T-cell (primary cell): ENCODE measurements at regions of chr6 and their contacts with region 1.

Region 1: DNA sequence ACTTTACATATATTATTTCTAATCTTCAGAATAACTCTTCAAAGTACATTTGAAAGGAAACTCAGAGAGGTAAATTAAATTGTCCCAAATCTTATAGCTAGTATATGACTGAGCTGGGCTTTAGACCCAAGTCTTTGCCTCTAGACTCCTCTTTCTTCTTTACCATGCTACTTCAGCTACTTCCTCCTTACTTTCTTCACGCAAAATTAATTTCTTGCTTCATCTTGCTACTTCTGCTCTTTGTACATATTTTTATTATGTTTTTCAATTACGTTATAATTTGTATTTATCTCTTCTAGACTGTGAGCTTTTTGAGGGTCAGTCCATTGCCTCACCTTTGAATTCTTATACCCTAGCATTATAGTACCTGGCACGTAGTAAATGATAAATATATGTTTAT is 5.3 kb downstream of the TMEM170B start:
- DNase-seq: no peak
- ATAC-seq: no peak
- H3K4me3 ChIP-seq: no peak overlapping the region
- H3K4me3 Mint-ChIP-seq: no peak overlapping the region
- H3K27ac ChIP-seq: no peak overlapping the region
- H3K27ac Mint-ChIP-seq: no peak overlapping the region
- H3K4me1 ChIP-seq: peaks cover 3 to 7% of the 10 kb centered on the region in 2 experiments
- H3K4me1 Mint-ChIP-seq: peaks cover 11 to 16% (median 15%) of the 10 kb centered on the region in 3 donors
- H3K27me3 ChIP-seq: no peaks in the 10 kb centered on the region
- H3K27me3 Mint-ChIP-seq: no peaks in the 10 kb centered on the region

Region 2: DNA sequence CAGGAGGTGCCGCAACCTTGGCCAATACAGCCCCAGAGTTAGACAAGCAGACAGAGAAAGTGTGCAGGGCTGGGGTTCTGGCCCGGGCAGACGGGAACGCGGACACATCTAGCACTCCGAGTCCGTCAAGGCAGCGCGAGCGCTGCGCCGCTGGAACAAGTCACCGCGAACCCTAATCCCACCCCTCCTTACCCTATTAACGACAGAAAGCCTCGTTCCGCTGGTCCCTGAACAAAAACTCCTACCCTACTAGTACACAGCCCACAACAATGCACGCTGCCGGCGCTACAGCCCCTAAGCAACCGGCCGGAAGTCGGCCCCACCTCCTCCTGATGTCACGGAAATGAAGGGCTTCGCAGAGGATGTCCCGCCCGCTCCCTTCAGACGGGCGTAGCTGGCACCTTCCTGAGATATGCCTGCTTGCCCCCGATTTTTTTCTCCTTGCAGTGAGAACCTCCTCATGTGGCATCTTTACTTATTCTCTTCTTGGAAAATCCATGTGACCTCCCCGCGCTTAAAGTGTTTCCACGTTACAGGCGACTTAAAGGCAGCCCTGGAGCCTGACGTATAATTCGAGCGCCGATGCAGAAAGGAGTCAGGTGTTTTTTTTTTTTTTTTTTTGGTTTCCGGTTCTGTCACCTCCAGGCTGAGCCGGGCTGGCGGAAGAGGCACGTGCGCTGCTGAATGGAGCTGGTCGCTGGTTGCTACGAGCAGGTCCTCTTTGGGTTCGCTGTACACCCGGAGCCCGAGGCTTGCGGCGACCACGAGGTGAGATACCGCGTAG is 848.4 kb before region 1 on chr6 and contains the starts of genes C6orf52 and PAK1IP1:
- CTCF ChIA-PET with region 1: no interaction called
- POLR2A ChIA-PET with region 1: interaction called in 1 of 2 experiments, 16 read pairs
- DNase-seq: peak; percentile 88 to 95 (median 93)
- ATAC-seq: peak; percentile 95 to 97 (median 96)
- H3K4me3 ChIP-seq: peak within 1 kb of the TSS; percentile 93 to 100
- H3K4me3 Mint-ChIP-seq: peak within 1 kb of the TSS; percentile 93 to 99 (median 99)
- H3K27ac ChIP-seq: peak within 1 kb of the TSS; percentile 98
- H3K27ac Mint-ChIP-seq: peak within 1 kb of the TSS; percentile 100
- H3K4me1 ChIP-seq: peaks cover 16 to 24% of the 10 kb centered on the region in 2 experiments
- H3K4me1 Mint-ChIP-seq: peaks cover 40 to 47% (median 41%) of the 10 kb centered on the region in 3 donors
- H3K27me3 ChIP-seq: no peaks in the 10 kb centered on the region
- H3K27me3 Mint-ChIP-seq: peaks cover 0 to 2% of the 10 kb centered on the region in 2 donors
- total RNA-seq, gene C6orf52: 1.1 to 1.7 (median 1.5) TPM in 3 of 5 donors, not detected in the others
- total RNA-seq, gene PAK1IP1: 5.2 to 10.2 (median 7.4) TPM

Region 3: GRCh38 chr6:11509471-11509870 is 33.4 kb before region 1 on chr6:
- CTCF ChIA-PET with region 1: no interaction called
- POLR2A ChIA-PET with region 1: no interaction called
- DNase-seq: no peak
- ATAC-seq: no peak
- H3K4me3 ChIP-seq: no peak overlapping the region
- H3K4me3 Mint-ChIP-seq: no peak overlapping the region
- H3K27ac ChIP-seq: no peak overlapping the region
- H3K27ac Mint-ChIP-seq: no peak overlapping the region
- H3K4me1 ChIP-seq: no peaks in the 10 kb centered on the region
- H3K4me1 Mint-ChIP-seq: no peaks in the 10 kb centered on the region
- H3K27me3 ChIP-seq: peaks cover 0 to 4% of the 10 kb centered on the region in 2 experiments
- H3K27me3 Mint-ChIP-seq: peaks cover 16 to 20% of the 10 kb centered on the region in 2 donors